Esophagus muscularis mucosa (tissue), 4 donors: ENCODE measurements at regions of chr2 and their contacts with region 1.

Region 1: GRCh38 chr2:21042958-21043743 is 722 bp downstream of the APOB start:
- DNase-seq: no peak
- H3K4me3 ChIP-seq: peak overlapping the region; percentile 16 to 37 (median 24)
- H3K27ac ChIP-seq: peak overlapping the region in 3 of 4 donors; percentile 28 to 65 (median 63)
- H3K4me1 ChIP-seq: peaks cover 16 to 55% (median 42%) of the 10 kb centered on the region in 4 donors
- H3K27me3 ChIP-seq: peaks cover 0 to 9% (median 0%) of the 10 kb centered on the region in 4 donors
- CTCF ChIP-seq: peak in 2 of 3 experiments; percentile 98
- EP300 ChIP-seq: no peak
- POLR2A ChIP-seq: no peak

Region 2: DNA sequence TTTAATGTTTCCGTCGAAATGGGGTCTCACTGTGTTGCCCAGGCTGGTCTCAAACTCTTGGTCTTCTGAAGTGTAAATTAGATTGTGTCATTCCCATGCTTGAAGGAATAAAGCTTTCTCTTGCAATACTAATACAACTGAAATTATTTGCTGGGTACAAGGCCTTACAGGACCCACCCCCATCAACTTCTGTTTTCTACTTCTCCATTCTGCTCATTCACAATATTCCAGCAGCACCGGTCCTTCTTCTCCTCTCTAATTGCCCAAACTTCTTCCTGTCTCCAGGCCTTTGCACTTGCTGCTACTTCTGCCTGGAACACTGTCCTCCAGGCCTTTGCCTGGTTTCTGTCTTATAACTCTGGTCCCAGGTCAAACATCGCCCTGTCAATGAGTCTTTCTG is 73.1 kb before region 1 on chr2:
- intact Hi-C with region 1: loop called (anchors 5 kb)
- DNase-seq: no peak
- H3K4me3 ChIP-seq: no peak overlapping the region
- H3K27ac ChIP-seq: peak overlapping the region in 1 of 4 donors; percentile 54
- H3K4me1 ChIP-seq: peaks cover 4 to 43% (median 35%) of the 10 kb centered on the region in 4 donors
- H3K27me3 ChIP-seq: no peaks in the 10 kb centered on the region
- CTCF ChIP-seq: no peak
- EP300 ChIP-seq: no peak
- POLR2A ChIP-seq: no peak

Region 3: DNA sequence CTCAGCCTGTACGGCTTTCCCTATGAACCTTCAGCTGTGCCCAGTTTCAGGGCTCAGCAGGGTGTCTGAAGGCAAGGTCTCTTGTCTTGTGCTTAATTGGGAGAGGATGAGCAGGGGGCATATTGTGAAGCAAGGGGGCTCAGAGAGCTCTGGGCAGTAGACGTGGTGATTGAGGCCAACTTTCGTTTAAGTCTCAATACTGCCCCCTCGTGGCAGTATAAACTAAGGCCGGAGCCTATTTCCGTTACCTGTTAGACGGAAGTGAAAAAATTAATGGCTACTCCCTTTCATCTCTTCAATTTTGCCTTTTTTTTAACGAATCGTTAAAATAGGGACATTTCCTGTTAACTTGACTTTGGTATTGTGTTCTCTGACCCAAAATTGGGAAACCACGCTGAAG is 274.0 kb after region 1 on chr2:
- intact Hi-C with region 1: loop called (anchors 5 kb)
- DNase-seq: peak; percentile 82
- H3K4me3 ChIP-seq: no peak overlapping the region
- H3K27ac ChIP-seq: no peak overlapping the region
- H3K4me1 ChIP-seq: no peaks in the 10 kb centered on the region
- H3K27me3 ChIP-seq: no peaks in the 10 kb centered on the region
- CTCF ChIP-seq: peak; percentile 42 to 65 (median 60)
- EP300 ChIP-seq: no peak
- POLR2A ChIP-seq: no peak